Activated CD4-positive, alpha-beta T cell treated with anti-CD3 and anti-CD28 coated beads for 36 hours (primary cell): ENCODE measurements at regions of chr1 and their contacts with region 1.

Region 1: DNA sequence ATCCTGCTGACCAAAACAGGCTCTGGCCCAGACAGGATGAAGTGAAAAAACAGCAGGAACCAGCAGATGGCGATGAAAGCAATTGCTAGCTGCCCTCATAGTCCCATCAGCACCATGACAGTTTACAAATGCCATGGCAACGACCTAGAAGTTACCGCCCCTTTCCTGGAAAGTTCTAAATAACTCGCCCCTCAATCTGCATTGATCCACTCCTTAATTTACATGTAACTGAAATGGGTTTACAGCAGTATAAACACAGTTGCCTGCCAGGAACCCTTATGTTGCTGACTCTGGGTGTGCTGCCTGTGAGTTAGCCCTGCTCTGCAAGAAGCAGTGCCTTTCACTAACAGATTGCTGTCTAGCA is 65.5 kb upstream of the CR1L start:
- DNase-seq: peak; percentile 63
- ATAC-seq: peak; percentile 84
- H3K4me3 Mint-ChIP-seq: no peak overlapping the region
- H3K27ac Mint-ChIP-seq: no peak overlapping the region
- H3K4me1 Mint-ChIP-seq: no peaks in the 10 kb centered on the region
- H3K27me3 Mint-ChIP-seq: peaks cover 6% of the 10 kb centered on the region

Region 2: DNA sequence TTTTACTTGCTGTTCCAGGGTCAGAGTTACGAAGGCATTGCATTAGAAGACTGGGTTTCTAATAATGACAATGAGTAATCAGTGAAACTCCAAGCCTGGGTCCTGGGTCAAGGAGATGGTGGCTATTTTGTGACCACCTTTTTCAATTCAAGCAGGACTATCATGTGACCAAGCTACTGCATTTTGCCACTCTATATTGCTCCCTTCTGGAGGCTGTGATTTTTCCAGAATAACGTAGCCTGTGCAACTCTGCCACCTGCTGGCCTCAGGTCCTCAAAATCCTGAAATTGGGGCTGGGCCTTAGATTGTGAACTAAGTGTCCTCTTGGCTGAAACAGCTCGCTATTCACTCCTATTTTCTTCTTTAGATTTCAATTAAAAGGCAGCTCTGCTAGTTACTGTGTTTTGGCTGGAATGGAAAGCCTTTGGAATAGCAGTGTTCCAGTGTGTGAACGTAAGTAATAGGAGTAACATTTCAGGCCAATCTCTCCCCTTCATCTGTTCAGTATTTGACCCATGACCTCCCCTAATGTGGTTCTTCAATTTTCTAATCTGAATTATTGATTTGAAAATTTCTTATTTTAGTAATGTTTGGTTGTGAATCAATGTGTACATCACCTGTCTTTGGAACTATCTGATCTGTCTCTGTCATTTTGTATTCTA is 119.5 kb after region 1 on chr1:
- CTCF ChIA-PET with region 1: interaction called, 10 read pairs
- POLR2A ChIA-PET with region 1: no interaction called
- intact Hi-C with region 1: no loop called
- DNase-seq: peak; percentile 66
- ATAC-seq: no peak
- H3K4me3 Mint-ChIP-seq: no peak overlapping the region
- H3K27ac Mint-ChIP-seq: no peak overlapping the region
- H3K4me1 Mint-ChIP-seq: no peaks in the 10 kb centered on the region
- H3K27me3 Mint-ChIP-seq: peaks cover under 1% of the 10 kb centered on the region